Left colon (tissue), 2 donors: ENCODE measurements at regions of chr5 and their contacts with region 1.

Region 1: GRCh38 chr5:174418928-174419796 is 305.2 kb upstream of the MSX2 start:
- DNase-seq: peak; percentile 71 to 90
- ATAC-seq: peak; percentile 92

Region 2: DNA sequence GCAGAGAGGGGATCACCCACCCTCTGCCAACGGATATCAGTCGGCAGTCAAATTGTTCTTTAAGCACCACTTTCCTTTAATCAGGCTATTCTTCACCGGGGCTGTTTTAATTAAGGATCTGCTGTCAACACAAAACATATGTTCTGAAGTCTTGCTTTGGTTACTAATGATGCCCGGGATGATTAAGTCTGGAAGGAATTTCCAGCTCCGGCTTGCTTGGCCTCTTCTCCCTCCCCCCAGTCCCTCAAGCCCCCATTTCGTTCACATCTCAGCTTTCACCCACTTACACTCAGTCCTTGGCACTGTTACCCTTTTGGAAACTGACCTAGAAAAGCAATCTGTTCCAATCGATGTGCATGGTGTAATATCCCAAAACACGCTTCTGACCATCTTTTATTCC is 380.0 kb after region 1 on chr5:
- intact Hi-C with region 1: loop called in 1 of 2 experiments (anchors 5 kb)
- DNase-seq: no peak
- ATAC-seq: no peak